OCI-LY7 (cell line): ENCODE measurements at regions of chr7 and their contacts with region 1.

Region 1: GRCh38 chr7:98420966-98421612 is 20.2 kb upstream of the BAIAP2L1 start:
- DNase-seq: peak; percentile 73
- H3K4me3 ChIP-seq: no peak overlapping the region
- H3K27ac ChIP-seq: no peak overlapping the region
- H3K4me1 ChIP-seq: no peaks in the 10 kb centered on the region
- CTCF ChIP-seq: peak; percentile 97

Region 2: DNA sequence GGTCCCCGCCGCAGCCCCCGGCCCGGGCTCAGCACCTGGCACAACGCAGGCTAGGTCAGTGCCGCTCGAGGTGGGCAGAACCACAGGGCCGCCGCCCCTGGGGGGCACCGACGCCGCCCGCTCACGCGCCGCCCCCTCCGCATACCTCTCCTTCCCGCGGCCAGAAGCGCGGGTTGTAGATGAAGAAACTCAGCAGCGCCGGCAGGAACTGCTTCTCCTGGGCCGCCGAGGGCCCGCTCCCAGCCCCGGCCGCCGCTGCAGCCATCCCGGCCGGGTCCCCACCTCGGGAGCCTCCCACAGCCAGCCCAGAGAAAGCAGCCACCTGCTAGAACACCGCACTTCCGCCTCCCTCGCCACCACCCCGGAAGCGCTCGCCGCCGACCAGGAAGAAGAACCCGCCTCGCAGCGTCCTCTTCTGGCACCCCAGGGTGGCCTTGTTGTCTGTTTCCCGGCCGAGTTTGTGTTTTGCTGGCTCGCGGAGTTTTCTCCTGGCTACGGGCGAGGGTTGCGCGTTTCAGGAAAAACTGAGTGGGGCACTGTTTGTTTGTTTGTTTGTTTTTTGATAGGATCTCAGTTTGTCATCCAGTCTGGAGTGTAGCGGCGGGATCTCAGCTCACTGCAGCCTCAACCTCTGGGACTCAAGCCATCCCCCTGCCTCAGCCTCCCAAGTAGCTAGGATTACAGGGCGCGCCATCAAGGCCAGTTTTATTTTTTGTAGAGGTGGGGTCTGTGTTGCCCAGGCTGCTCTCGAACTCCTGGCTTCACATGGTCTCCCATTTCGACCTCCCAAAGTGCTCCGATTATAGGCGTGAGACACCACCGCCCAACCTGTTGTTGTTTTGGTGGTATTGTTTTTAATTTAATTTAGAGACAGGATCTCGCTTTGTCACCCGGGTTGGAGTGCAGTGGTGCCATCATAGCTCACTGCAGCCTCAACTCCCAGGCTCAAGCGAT is 448.8 kb before region 1 on chr7:
- CTCF ChIA-PET with region 1: no interaction called
- POLR2A ChIA-PET with region 1: no interaction called
- intact Hi-C with region 1: no loop called
- DNase-seq: peak; percentile 88
- H3K4me3 ChIP-seq: peak overlapping the region; percentile 94
- H3K27ac ChIP-seq: peak overlapping the region; percentile 65
- H3K4me1 ChIP-seq: peaks cover 12% of the 10 kb centered on the region
- CTCF ChIP-seq: peak; percentile 71

Region 3: DNA sequence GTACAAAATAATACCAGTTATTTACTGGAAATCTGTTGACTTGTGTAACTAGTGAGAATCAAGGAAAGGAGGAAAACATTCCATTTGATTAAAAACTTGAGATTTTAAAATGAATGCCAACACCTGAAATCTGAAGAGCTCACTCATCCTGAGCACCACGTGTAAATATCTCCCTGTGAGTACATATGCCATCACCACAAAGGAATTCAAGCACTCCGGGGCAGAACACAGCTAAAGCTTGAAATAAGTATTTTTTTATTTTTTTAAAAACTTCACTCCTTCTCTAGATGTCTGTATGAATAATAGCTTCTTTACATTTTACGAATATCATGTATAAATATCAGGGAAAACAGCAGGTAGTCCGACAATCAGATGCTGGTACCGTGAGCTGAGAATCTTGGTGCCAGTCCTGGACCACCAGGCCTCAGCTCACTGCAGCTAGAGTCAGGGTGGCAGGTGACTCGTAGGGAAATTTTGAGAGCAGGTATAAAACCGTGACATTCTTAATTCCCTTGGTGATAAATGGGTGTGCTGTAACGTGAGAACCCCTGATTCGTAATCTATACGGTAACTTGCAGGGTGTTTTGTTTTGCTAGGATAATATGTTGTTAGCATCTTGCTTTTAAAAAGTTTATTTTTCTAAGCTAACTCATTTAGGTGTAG is 301.7 kb before region 1 on chr7:
- CTCF ChIA-PET with region 1: no interaction called
- POLR2A ChIA-PET with region 1: no interaction called
- intact Hi-C with region 1: no loop called
- DNase-seq: no peak
- H3K4me3 ChIP-seq: no peak overlapping the region
- H3K27ac ChIP-seq: no peak overlapping the region
- H3K4me1 ChIP-seq: no peaks in the 10 kb centered on the region
- CTCF ChIP-seq: no peak

Region 4: GRCh38 chr7:98294796-98295382 is 126.2 kb before region 1 on chr7:
- CTCF ChIA-PET with region 1: no interaction called
- POLR2A ChIA-PET with region 1: no interaction called
- intact Hi-C with region 1: loop called (anchors 5 kb)
- DNase-seq: peak; percentile 58
- H3K4me3 ChIP-seq: no peak overlapping the region
- H3K27ac ChIP-seq: no peak overlapping the region
- H3K4me1 ChIP-seq: peaks cover 4% of the 10 kb centered on the region
- CTCF ChIP-seq: peak; percentile 80

Region 5: GRCh38 chr7:98387544-98388224 is 33.4 kb before region 1 on chr7:
- CTCF ChIA-PET with region 1: no interaction called
- POLR2A ChIA-PET with region 1: no interaction called
- intact Hi-C with region 1: no loop called
- DNase-seq: no peak
- H3K4me3 ChIP-seq: no peak overlapping the region
- H3K27ac ChIP-seq: no peak overlapping the region
- H3K4me1 ChIP-seq: no peaks in the 10 kb centered on the region
- CTCF ChIP-seq: no peak

Region 6: GRCh38 chr7:98559958-98560357 is 138.9 kb after region 1 on chr7:
- CTCF ChIA-PET with region 1: no interaction called
- POLR2A ChIA-PET with region 1: no interaction called
- intact Hi-C with region 1: no loop called
- DNase-seq: peak; percentile 34
- H3K4me3 ChIP-seq: no peak overlapping the region
- H3K27ac ChIP-seq: no peak overlapping the region
- H3K4me1 ChIP-seq: no peaks in the 10 kb centered on the region
- CTCF ChIP-seq: no peak

Region 7: GRCh38 chr7:98733036-98733435 is 311.9 kb after region 1 on chr7:
- CTCF ChIA-PET with region 1: interaction called, 10 read pairs
- POLR2A ChIA-PET with region 1: no interaction called
- intact Hi-C with region 1: no loop called
- DNase-seq: peak; percentile 71
- H3K4me3 ChIP-seq: no peak overlapping the region
- H3K27ac ChIP-seq: no peak overlapping the region
- H3K4me1 ChIP-seq: no peaks in the 10 kb centered on the region
- CTCF ChIP-seq: peak; percentile 92